ENCODE measurements at regions of chr16 and their contacts with region 1.

Region 1: GRCh38 chr16:74862741-74863244 is 88.2 kb upstream of the FA2H start:
- DNase-seq: no peak
- ATAC-seq: peak; percentile 28
- H3K4me3 Mint-ChIP-seq: no peak overlapping the region
- H3K27ac Mint-ChIP-seq: no peak overlapping the region
- H3K4me1 Mint-ChIP-seq: no peaks in the 10 kb centered on the region
- H3K27me3 Mint-ChIP-seq: no peaks in the 10 kb centered on the region
- CTCF ChIP-seq: peak; percentile 60

Region 2: GRCh38 chr16:74709441-74709877 is 153.3 kb before region 1 on chr16:
- CTCF ChIA-PET with region 1: interaction called, 77 read pairs
- POLR2A ChIA-PET with region 1: no interaction called
- intact Hi-C with region 1: loop called (anchors 1 kb)
- DNase-seq: peak; percentile 69
- ATAC-seq: peak; percentile 98
- H3K4me3 Mint-ChIP-seq: no peak overlapping the region
- H3K27ac Mint-ChIP-seq: no peak overlapping the region
- H3K4me1 Mint-ChIP-seq: peaks cover 3% of the 10 kb centered on the region
- H3K27me3 Mint-ChIP-seq: no peaks in the 10 kb centered on the region
- CTCF ChIP-seq: peak; percentile 88

Region 3: DNA sequence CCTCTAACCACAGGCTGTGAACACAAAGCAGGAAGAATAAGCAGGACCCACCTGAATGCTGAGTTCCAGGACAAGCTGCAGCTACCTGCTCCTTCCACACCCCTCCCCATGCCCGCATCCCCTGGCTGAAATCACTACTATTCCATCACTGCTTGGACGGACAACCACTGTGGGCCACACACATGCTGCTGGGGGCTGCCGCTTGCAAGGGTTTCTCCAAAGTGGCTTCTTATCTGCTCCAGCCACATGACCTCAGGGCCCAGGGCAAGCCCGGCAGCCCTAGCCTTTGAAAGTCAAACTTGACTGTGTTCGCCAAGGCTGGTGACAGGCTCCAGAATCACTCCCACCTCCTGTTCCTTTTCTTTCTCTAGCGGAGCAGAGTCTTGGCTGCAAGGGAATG is 106.6 kb before region 1 on chr16:
- CTCF ChIA-PET with region 1: no interaction called
- POLR2A ChIA-PET with region 1: no interaction called
- intact Hi-C with region 1: no loop called
- DNase-seq: no peak
- ATAC-seq: no peak
- H3K4me3 Mint-ChIP-seq: no peak overlapping the region
- H3K27ac Mint-ChIP-seq: no peak overlapping the region
- H3K4me1 Mint-ChIP-seq: no peaks in the 10 kb centered on the region
- H3K27me3 Mint-ChIP-seq: peaks cover 2% of the 10 kb centered on the region
- CTCF ChIP-seq: no peak

Region 4: GRCh38 chr16:74813109-74813641 is 49.6 kb before region 1 on chr16:
- CTCF ChIA-PET with region 1: interaction called, 12 read pairs
- POLR2A ChIA-PET with region 1: no interaction called
- intact Hi-C with region 1: loop called (anchors 1 kb)
- DNase-seq: peak; percentile 59
- ATAC-seq: peak; percentile 96
- H3K4me3 Mint-ChIP-seq: no peak overlapping the region
- H3K27ac Mint-ChIP-seq: no peak overlapping the region
- H3K4me1 Mint-ChIP-seq: no peaks in the 10 kb centered on the region
- H3K27me3 Mint-ChIP-seq: peaks cover 13% of the 10 kb centered on the region
- CTCF ChIP-seq: peak; percentile 78

Region 5: GRCh38 chr16:74852500-74852875 is 10.3 kb before region 1 on chr16:
- CTCF ChIA-PET with region 1: interaction called, 10 read pairs
- POLR2A ChIA-PET with region 1: no interaction called
- intact Hi-C with region 1: no loop called
- DNase-seq: no peak
- ATAC-seq: no peak
- H3K4me3 Mint-ChIP-seq: no peak overlapping the region
- H3K27ac Mint-ChIP-seq: no peak overlapping the region
- H3K4me1 Mint-ChIP-seq: no peaks in the 10 kb centered on the region
- H3K27me3 Mint-ChIP-seq: no peaks in the 10 kb centered on the region
- CTCF ChIP-seq: no peak

Measured in activated B cell treated with CpG ODN at 0.5 μM for 24 hours (primary cell).